GM18951 (cell line): ENCODE measurements at regions of chr10 and their contacts with region 1.

Region 1: DNA sequence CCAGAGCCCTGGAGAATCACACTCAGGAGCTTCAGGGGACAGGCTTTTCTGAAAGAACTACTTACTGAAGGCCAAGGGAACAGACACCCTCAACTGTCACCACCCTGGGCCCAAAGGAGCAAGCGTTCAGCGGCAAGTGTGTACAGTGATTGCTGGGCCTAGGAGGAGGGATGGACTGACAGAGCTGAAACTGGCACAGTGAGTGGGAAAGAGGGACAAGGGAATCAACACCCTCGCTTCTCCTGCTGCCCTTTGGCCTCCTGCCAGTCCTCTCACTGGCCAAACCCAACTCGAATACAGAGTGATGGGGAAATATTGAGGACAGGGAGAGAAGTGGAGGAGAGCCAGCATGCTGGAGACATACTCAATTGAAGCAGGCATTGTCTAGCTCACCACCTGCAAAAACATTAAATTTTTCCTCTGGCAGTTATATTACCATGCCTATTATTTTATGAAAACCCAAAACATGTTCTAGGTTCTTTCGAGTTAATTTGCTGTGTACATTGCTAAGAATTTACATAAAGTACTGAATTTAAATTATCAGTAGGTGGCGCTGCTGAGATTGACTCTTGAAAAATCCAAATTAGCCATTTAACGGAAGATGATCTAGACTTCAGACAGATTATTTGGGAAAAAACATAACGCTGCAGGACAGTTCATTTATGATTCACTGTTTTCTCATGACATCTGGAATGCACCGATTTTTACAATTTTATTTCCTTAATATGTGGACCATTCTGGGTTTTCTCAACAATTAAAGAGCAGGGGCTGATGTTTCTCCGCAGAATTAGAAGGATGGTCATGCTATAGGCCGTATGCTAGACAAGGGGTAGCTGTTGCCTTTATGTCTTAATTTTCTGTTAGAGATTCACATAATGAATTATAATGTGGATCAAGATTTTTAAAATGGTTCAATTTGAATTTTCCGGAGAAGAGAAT is 14.7 kb upstream of the TMEM236 start:
- POLR2A ChIP-seq: no peak

Region 2: DNA sequence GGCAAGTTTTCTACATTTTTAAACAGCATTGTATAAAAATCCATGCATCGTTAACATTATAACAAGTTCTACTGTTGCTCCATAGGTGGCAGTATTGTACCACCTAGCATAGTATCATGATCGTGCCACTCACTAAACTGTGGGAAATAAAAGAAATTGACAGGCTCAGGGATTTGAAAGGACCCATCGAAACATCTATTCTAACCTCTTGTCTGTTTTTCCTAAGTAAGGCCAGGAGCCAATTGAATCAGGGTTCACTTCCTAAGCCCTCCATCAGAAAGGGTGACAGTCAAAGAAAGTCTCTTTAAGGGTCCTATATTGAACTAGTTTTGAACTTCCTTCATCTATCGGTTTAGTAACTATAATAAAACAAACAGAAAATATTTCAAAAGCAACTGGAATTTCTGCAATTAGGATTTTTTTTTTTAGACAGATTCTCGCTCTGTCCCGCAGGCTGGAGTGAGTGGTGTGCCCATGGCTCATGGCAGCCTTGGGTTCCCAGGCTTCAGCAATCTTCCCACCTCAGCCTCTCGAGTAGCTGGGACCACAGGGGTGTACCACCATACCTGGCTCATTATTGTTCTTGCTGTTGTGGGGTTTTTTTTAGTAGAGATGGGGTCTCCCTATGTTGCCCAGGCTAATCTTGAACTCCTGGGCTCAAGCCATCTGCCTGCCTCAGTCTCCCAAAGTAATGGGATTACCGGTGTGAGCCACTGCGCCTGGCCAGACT is 129.5 kb before region 1 on chr10:
- in situ Hi-C with region 1: loop called (anchors 10 kb)
- POLR2A ChIP-seq: no peak

Region 3: GRCh38 chr10:17923728-17924127 is 186.4 kb after region 1 on chr10:
- in situ Hi-C with region 1: no loop called
- POLR2A ChIP-seq: no peak